ENCODE measurements at regions of chr7 and their contacts with region 1.

Region 1: GRCh38 chr7:128209229-128210035 is 31.6 kb upstream of the LEP start:
- DNase-seq: peak; percentile 81 to 91
- ATAC-seq: peak; percentile 76 to 84
- H3K4me3 ChIP-seq: no peak overlapping the region
- H3K27ac ChIP-seq: no peak overlapping the region
- H3K4me1 ChIP-seq: no peaks in the 10 kb centered on the region
- CTCF ChIP-seq: peak; percentile 98
- EP300 ChIP-seq: no peak
- POLR2A ChIP-seq: no peak
- RAD21 ChIP-seq: peak; percentile 98 to 99

Region 2: DNA sequence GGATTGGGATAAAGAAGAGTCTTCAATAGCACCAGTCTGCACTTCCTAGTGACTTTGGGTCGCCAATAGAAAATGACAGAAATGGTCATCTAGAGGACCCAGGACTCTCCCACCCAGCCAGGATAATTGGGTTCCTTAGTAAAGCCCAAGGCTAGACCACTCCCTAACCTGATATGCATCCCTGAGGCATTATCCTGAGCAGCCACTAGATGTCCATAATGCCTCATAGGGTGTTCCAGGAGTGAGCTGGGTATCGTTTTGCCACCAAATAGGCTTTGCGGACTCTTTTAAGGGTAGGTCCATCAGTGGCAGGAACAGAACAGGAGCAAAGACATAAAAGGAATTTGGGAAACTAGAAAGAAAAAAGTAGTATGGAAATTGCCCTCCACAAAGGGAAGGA is 173.7 kb before region 1 on chr7:
- CTCF ChIA-PET with region 1: interaction called, 14 read pairs
- POLR2A ChIA-PET with region 1: no interaction called
- DNase-seq: peak; percentile 19 to 44
- ATAC-seq: peak; percentile 75 to 92
- H3K4me3 ChIP-seq: no peak overlapping the region
- H3K27ac ChIP-seq: no peak overlapping the region
- H3K4me1 ChIP-seq: no peaks in the 10 kb centered on the region
- CTCF ChIP-seq: peak; percentile 37; the same call in 2 of the 3 replicates
- EP300 ChIP-seq: no peak
- POLR2A ChIP-seq: no peak
- RAD21 ChIP-seq: peak; percentile 43 to 48

Region 3: GRCh38 chr7:128135515-128136214 is 73.8 kb before region 1 on chr7:
- CTCF ChIA-PET with region 1: interaction called, 202 read pairs
- POLR2A ChIA-PET with region 1: interaction called, 3 read pairs
- DNase-seq: peak; percentile 48 to 81
- ATAC-seq: peak; percentile 94
- H3K4me3 ChIP-seq: peak overlapping the region; percentile 57
- H3K27ac ChIP-seq: peak overlapping the region; percentile 76 to 87; a peak in 5 of 6 replicates
- H3K4me1 ChIP-seq: peaks cover 8% of the 10 kb centered on the region
- CTCF ChIP-seq: peak; percentile 92
- EP300 ChIP-seq: no peak
- POLR2A ChIP-seq: 0 out of 2 replicates have a peak, but pooled peaks have one; percentile 5
- RAD21 ChIP-seq: peak; percentile 49 to 81; a peak in 4 of 5 replicates

Region 4: DNA sequence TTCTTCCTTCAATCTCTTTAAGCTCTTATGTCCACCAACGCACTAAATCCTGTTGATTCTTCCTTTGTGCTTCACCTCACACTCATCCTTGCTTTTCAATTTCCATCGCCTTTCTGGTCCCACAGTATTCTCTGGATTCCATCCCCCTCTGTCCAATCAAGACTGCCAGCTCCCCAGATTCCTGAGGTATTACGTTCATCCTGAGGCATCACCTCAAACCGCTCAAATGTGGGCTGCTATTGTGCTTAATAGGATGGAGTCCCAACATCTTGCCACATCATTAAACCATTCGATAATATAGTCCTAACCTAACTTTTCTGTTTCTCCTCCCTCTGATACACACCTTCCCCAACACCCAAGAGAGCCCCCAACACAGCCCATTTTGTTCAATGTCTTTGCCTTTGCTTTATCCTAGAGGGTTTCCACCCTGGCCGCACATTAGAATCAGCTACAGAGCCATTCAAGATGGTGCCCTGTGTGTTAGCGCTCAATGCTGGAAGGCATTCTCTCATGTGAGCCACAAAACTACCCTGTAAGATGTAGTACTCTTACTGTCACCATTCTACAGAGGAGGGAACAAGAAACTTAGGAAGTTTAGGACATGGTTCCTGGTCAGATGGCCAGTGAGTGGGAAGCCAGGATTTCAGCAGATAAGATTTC is 47.8 kb before region 1 on chr7:
- CTCF ChIA-PET with region 1: interaction called, 16 read pairs
- POLR2A ChIA-PET with region 1: no interaction called
- DNase-seq: no peak
- ATAC-seq: no peak
- H3K4me3 ChIP-seq: no peak overlapping the region
- H3K27ac ChIP-seq: no peak overlapping the region
- H3K4me1 ChIP-seq: peaks cover 17% of the 10 kb centered on the region
- CTCF ChIP-seq: no peak
- EP300 ChIP-seq: no peak
- POLR2A ChIP-seq: no peak
- RAD21 ChIP-seq: no peak

Region 5: GRCh38 chr7:128221929-128222403 is 12.5 kb after region 1 on chr7:
- CTCF ChIA-PET with region 1: interaction called, 69 read pairs
- POLR2A ChIA-PET with region 1: no interaction called
- DNase-seq: peak; percentile 47 to 57
- ATAC-seq: peak in 1 of 2 experiments; percentile 54; a peak in 3 of 6 replicates
- H3K4me3 ChIP-seq: no peak overlapping the region
- H3K27ac ChIP-seq: no peak overlapping the region
- H3K4me1 ChIP-seq: peaks cover 11% of the 10 kb centered on the region
- CTCF ChIP-seq: no peak
- EP300 ChIP-seq: no peak
- POLR2A ChIP-seq: no peak
- RAD21 ChIP-seq: no peak

Region 6: DNA sequence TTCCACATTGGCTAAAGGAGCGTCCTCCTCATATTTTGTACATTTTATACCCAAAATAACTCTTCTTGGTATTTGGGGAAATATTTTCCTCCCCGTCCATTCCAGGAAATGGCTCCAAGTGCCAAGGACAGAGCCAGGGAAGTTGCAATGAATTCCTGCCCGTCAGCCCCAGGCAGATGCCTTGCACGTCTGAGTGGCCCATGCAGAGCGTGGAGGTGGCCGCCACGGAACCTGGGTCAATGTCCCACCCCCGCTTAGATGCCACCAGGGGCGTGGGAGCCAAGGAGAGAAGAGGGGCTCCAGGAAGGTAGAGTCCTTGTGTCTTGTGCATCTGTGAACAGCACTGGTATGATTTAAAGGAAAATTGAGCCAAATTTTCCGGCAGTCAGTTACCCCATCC is 33.2 kb after region 1 on chr7:
- CTCF ChIA-PET with region 1: no interaction called
- POLR2A ChIA-PET with region 1: no interaction called
- DNase-seq: no peak
- ATAC-seq: no peak
- H3K4me3 ChIP-seq: no peak overlapping the region
- H3K27ac ChIP-seq: no peak overlapping the region
- H3K4me1 ChIP-seq: 0 out of 3 replicates have a peak, but pooled peaks cover under 1% of the 10 kb centered on the region
- CTCF ChIP-seq: no peak
- EP300 ChIP-seq: no peak
- POLR2A ChIP-seq: no peak
- RAD21 ChIP-seq: no peak

Region 7: DNA sequence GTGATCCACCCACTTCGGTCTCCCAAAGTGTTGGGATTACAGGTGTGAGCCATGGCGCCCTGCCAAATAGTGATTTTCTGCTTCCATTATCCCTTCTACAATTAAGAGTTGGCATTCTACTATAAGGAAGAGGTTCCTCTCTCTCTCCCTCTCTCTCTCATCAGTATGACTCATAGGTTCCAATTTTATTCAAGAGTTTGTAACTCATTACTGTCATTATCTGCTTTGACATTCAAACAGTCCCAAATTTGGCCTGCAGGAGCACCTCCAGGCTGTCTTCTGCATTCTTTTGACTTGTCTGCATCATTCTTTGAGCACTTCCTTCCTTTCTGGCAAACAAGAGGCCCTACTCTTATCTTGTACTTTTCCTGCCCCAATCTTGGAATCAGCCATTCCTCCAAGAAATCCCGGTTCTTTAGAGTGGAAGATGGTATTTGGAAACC is 496.5 kb after region 1 on chr7:
- CTCF ChIA-PET with region 1: no interaction called
- POLR2A ChIA-PET with region 1: no interaction called
- DNase-seq: no peak
- ATAC-seq: no peak
- H3K4me3 ChIP-seq: no peak overlapping the region
- H3K27ac ChIP-seq: no peak overlapping the region
- H3K4me1 ChIP-seq: no peaks in the 10 kb centered on the region
- CTCF ChIP-seq: no peak
- EP300 ChIP-seq: no peak
- POLR2A ChIP-seq: no peak
- RAD21 ChIP-seq: no peak